ENCODE measurements at regions of chr17 and their contacts with region 1.

Region 1: DNA sequence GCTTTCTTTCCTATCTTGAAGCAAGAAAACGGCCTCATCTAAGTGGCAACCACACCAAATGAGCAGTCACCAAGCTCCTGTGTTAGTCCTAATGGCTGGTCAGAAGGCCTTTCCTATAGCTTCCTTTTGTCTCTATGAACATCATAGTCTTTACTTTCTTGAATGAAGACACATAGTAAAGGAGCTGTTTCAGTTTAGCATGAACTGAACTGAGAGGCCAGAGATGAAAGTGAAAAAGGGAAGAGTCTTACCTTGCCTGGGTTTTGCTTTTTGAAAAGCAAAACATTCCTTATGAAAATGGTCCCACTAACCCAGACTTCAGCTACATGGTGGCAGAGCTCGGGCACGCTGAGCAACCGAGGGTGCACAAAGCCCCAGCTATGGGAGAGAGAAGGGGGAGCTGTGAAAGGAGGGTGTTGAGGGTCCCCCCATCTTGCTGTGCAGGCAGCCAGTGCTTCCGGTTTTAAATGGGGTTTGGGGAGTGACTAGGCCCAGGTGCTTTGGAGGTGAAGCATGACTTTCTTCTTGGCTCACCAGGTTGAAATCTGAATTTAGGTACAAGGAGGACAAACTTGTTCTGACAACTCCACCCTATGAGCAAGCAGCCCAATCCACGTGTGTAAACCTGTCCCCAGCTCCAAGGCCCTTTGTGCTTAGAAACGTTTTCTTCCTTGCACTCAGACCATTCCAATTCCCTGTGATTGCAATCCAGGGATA is 9.1 kb upstream of the PSMC3IP start:
- DNase-seq: peak; percentile 77
- H3K4me3 ChIP-seq: no peak overlapping the region
- H3K27ac ChIP-seq: peak overlapping the region; percentile 67 to 78
- H3K4me1 ChIP-seq: peaks cover 27% of the 10 kb centered on the region
- H3K27me3 ChIP-seq: no peaks in the 10 kb centered on the region
- CTCF ChIP-seq: no peak
- POLR2A ChIP-seq: no peak

Region 2: GRCh38 chr17:42760652-42761581 is 174.2 kb after region 1 on chr17 and contains the start of gene RAMP2:
- intact Hi-C with region 1: loop called (anchors 10 kb)
- DNase-seq: no peak
- H3K4me3 ChIP-seq: peak within 1 kb of the TSS; percentile 48 to 52
- H3K27ac ChIP-seq: peak within 1 kb of the TSS; percentile 47 to 53
- H3K4me1 ChIP-seq: no peaks in the 10 kb centered on the region
- H3K27me3 ChIP-seq: no peaks in the 10 kb centered on the region
- CTCF ChIP-seq: peak in 1 of 4 experiments; percentile 13
- POLR2A ChIP-seq: no peak
- total RNA-seq, gene RAMP2: 16.3 TPM

Region 3: GRCh38 chr17:43449470-43450248 is 863.0 kb after region 1 on chr17:
- intact Hi-C with region 1: no loop called
- DNase-seq: peak; percentile 69
- H3K4me3 ChIP-seq: no peak overlapping the region
- H3K27ac ChIP-seq: peak overlapping the region; percentile 25 to 45
- H3K4me1 ChIP-seq: no peaks in the 10 kb centered on the region
- H3K27me3 ChIP-seq: no peaks in the 10 kb centered on the region
- CTCF ChIP-seq: no peak
- POLR2A ChIP-seq: no peak